Testis (tissue), 5 donors: ENCODE measurements at regions of chr12 and their contacts with region 1.

Region 1: DNA sequence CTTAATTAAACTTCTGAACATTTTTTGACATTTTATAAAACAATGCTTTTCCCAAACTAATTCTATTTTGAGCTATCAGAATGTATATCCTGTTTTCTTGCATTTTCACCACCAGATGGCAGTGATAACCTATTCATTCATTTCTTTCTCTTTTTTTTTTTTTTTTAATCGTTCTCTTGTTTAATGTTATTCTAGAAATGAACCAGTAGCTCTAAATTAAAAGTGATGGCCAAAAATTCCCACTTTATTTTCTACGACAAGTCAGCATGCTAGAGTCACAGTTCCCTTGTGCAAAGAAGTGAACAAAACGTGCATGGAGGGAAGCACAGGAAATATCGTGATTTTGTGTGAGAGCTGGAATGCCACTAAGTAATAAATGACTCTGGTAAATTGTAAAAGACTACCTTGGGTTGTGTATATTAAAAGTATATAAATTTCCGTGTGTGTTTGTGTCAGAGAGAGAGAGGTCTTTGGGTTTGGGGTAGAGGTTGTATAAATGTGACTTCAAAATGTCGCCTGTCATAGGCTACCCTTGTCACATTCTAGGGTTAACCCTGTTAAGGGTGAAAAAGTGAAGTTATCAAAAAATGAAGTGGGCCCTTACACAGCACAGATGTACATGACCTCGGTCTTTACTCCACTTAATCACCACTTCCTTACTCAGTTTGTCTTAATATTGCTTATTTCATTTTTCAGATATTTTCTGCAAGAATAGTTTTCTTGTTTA is 40.4 kb upstream of the LDHB start:
- DNase-seq: no peak
- H3K4me3 ChIP-seq: no peak overlapping the region
- H3K27ac ChIP-seq: no peak overlapping the region
- H3K4me1 ChIP-seq: no peaks in the 10 kb centered on the region
- H3K27me3 ChIP-seq: no peaks in the 10 kb centered on the region
- CTCF ChIP-seq: peak; percentile 17 to 64 (median 41)
- POLR2A ChIP-seq: no peak

Region 2: GRCh38 chr12:21925296-21925913 is 227.3 kb after region 1 on chr12:
- intact Hi-C with region 1: no loop called
- DNase-seq: no peak
- H3K4me3 ChIP-seq: no peak overlapping the region
- H3K27ac ChIP-seq: no peak overlapping the region
- H3K4me1 ChIP-seq: no peaks in the 10 kb centered on the region
- H3K27me3 ChIP-seq: no peaks in the 10 kb centered on the region
- CTCF ChIP-seq: no peak
- POLR2A ChIP-seq: no peak

Region 3: GRCh38 chr12:21989819-21990412 is 291.8 kb after region 1 on chr12:
- intact Hi-C with region 1: loop called (anchors 10 kb)
- DNase-seq: no peak
- H3K4me3 ChIP-seq: no peak overlapping the region
- H3K27ac ChIP-seq: no peak overlapping the region
- H3K4me1 ChIP-seq: no peaks in the 10 kb centered on the region
- H3K27me3 ChIP-seq: no peaks in the 10 kb centered on the region
- CTCF ChIP-seq: peak in 2 of 3 experiments; percentile 41
- POLR2A ChIP-seq: no peak